ENCODE measurements at regions of chr5 and their contacts with region 1.

Region 1: GRCh38 chr5:103145196-103145595 is 25.1 kb downstream of the PPIP5K2 start:
- DNase-seq: no peak
- H3K4me3 ChIP-seq: no peak overlapping the region
- H3K27ac ChIP-seq: no peak overlapping the region
- H3K4me1 ChIP-seq: no peaks in the 10 kb centered on the region
- H3K27me3 ChIP-seq: no peaks in the 10 kb centered on the region
- CTCF ChIP-seq: no peak

Region 2: DNA sequence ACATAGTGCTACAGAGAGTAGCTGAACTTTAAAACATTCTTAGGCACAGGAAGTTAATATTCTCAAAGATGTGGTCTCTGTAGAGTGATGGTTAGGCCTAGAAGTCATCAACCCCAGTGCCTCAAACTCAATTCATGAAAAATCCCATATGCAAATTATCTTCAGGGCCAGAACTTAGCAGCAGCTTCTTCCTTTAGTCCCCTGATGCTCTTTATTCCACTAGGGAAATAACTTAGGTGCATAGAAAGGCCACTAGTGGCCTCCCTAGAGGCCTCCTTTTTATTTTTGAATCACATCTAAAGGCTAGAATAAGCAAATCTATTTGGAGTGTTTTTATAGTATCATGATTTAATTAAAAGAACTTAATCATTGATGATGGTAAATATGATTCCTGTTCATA is 113.6 kb before region 1 on chr5:
- intact Hi-C with region 1: loop called (anchors 10 kb)
- DNase-seq: no peak
- H3K4me3 ChIP-seq: no peak overlapping the region
- H3K27ac ChIP-seq: no peak overlapping the region
- H3K4me1 ChIP-seq: no peaks in the 10 kb centered on the region
- H3K27me3 ChIP-seq: no peaks in the 10 kb centered on the region
- CTCF ChIP-seq: no peak

Region 3: DNA sequence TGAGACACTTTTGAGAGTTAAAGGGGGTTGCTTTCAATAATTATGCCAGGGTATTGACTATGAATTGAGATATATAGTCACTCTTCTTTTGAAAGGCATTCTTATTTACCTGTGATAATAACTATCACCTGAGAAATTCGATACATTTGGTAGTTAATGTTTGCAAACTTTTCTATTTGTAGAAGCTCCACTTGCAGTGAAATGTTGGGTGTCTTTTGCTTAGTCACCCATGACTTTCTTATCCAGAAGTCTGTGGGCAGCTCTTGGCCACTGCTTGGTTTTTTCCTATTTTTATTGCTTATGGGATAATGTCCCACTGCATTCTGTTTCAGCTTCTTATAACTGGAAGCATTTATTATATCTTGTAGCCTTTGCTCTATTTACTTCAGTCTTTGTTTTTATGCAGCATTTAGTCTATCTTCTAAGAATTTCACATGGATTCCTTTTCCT is 117.3 kb after region 1 on chr5:
- intact Hi-C with region 1: no loop called
- DNase-seq: no peak
- H3K4me3 ChIP-seq: no peak overlapping the region
- H3K27ac ChIP-seq: no peak overlapping the region
- H3K4me1 ChIP-seq: peaks cover 11% of the 10 kb centered on the region
- H3K27me3 ChIP-seq: no peaks in the 10 kb centered on the region
- CTCF ChIP-seq: no peak

Measured in colonic mucosa (tissue), 4 donors.